ENCODE measurements at regions of chr1 and their contacts with region 1.

Region 1: GRCh38 chr1:160877221-160877620 is 7.8 kb downstream of the ITLN1 start:
- H3K4me3 Mint-ChIP-seq: no peak overlapping the region
- H3K27ac Mint-ChIP-seq: no peak overlapping the region
- H3K4me1 Mint-ChIP-seq: peaks cover 56% of the 10 kb centered on the region
- H3K27me3 Mint-ChIP-seq: no peaks in the 10 kb centered on the region

Region 2: GRCh38 chr1:160837558-160838205 is 39.5 kb before region 1 on chr1:
- intact Hi-C with region 1: loop called (anchors 5 kb)
- H3K4me3 Mint-ChIP-seq: no peak overlapping the region
- H3K27ac Mint-ChIP-seq: no peak overlapping the region
- H3K4me1 Mint-ChIP-seq: peaks cover 29% of the 10 kb centered on the region
- H3K27me3 Mint-ChIP-seq: no peaks in the 10 kb centered on the region

Region 3: GRCh38 chr1:160971618-160972056 is 94.4 kb after region 1 on chr1:
- intact Hi-C with region 1: no loop called
- H3K4me3 Mint-ChIP-seq: no peak overlapping the region
- H3K27ac Mint-ChIP-seq: no peak overlapping the region
- H3K4me1 Mint-ChIP-seq: no peaks in the 10 kb centered on the region
- H3K27me3 Mint-ChIP-seq: peaks cover 12% of the 10 kb centered on the region

Measured in dendritic cell treated with granulocyte-macrophage colony-stimulating factor and Interleukin-4, amounts not matched to agents 40 ng/mL and 50 ng/mL, for 4 days (primary cell).